Endothelial cell of umbilical vein (primary cell): ENCODE measurements at regions of chr2 and their contacts with region 1.

Region 1: DNA sequence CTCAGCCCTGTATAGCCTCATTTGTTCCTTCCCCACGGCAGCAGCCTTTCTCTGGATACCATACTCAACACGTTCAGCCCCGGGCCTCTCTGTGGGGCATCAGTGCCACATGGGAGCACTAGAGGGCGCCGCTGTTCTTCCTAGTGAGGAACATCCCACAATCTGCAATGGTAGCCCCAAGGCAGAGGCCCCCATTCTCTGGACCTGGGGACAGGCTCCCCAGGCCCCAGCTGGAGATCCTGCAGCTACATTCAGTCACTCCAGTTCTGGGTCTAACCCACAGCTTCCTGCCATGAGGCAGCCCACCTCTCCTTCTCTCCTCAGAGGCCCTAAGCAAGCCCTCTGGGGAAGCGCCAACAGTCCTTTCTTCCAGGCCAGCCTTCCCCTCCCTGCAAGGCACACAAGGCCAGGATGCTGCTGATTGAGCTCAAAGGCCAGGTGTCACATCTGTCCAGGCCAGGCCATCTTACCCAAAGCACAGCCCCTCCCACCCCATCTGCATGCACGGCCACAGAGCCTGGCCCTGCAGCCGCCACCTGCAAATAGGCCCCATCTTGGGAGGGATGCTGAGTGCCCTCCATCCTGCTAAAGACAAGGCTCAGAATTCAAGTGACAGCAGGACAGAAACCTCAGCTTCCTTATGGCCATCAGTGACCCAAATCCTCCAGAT is 14.3 kb upstream of the SFXN5 start:
- DNase-seq: peak; percentile 76
- H3K4me3 ChIP-seq: no peak overlapping the region
- H3K27ac ChIP-seq: no peak overlapping the region
- H3K4me1 ChIP-seq: peaks cover 31% of the 10 kb centered on the region
- H3K27me3 ChIP-seq: no peaks in the 10 kb centered on the region
- CTCF ChIP-seq: peak; percentile 95 to 96
- POLR2A ChIP-seq: no peak

Region 2: DNA sequence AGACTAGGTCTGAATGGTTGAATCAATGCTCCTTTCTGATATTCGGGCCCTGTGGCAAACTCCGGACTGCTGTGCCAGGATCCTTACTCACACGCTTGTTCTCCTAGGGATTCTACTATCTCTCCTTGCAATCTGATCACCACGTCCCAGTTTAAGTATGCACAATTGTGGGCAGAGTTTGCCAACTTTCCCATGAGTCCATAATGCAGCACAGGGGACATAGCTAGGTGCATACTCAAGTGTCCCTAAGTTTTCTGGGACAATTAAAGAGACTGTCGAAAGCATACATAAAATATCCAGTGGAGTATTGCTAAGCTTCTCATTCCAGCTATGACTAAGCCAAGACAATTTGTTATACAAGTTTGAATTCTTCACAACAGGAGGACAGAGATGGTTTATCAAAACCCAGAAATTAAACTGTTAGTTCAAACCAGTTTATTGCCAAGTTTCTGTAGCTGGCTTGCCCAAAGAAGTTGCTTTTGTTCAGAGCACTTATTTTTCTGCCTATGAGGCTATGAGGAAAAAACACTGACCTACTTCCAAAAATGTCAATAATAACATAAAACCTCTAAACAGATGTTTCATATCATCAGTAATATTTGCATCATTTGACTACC is 396.1 kb before region 1 on chr2:
- CTCF ChIA-PET with region 1: no interaction called
- POLR2A ChIA-PET with region 1: no interaction called
- dilution Hi-C with region 1: no loop called
- intact Hi-C with region 1: no loop called
- DNase-seq: no peak
- H3K4me3 ChIP-seq: no peak overlapping the region
- H3K27ac ChIP-seq: no peak overlapping the region
- H3K4me1 ChIP-seq: no peaks in the 10 kb centered on the region
- H3K27me3 ChIP-seq: no peaks in the 10 kb centered on the region
- CTCF ChIP-seq: no peak
- POLR2A ChIP-seq: no peak

Region 3: DNA sequence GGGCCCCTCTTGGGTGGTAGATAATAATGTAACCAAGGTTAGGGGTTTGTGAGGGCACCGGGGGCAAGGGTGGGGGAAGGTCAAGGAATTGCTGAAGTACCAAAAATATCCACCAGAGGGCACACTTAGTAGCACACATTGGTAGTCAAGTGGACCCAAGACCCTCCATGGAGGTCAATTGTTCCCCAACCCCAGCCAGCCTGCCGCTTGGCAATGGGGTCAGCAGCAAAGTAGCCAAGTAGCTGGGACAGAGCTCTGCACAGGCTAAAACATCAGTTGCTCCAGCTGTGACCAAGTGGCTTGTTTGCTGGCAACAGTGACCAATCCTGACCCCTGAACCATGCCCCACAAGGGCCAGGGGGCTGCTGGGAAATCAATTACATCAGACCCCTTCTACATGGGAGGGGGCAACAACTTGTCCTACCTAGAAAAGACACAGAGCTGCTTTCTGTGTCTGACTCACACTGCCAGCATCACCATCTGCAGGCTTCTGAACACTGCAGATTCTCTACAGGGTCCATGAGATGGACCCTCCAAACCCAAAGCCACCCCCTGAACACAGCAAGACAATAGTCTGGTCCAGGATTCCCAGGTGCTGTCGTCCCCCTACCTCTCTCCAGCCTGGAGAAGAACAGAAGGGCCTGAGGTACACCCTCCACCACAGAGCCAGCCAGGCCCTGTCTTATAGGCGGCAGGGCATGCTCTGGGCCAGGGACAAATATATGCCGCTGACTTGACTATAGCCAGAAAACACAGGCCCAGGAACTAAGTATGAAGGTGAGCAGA is 92.5 kb before region 1 on chr2:
- CTCF ChIA-PET with region 1: interaction called, 6 read pairs
- POLR2A ChIA-PET with region 1: no interaction called
- dilution Hi-C with region 1: no loop called
- intact Hi-C with region 1: loop called (anchors 1 kb)
- DNase-seq: peak; percentile 51
- H3K4me3 ChIP-seq: no peak overlapping the region
- H3K27ac ChIP-seq: no peak overlapping the region
- H3K4me1 ChIP-seq: no peaks in the 10 kb centered on the region
- H3K27me3 ChIP-seq: no peaks in the 10 kb centered on the region
- CTCF ChIP-seq: peak; percentile 57 to 70
- POLR2A ChIP-seq: no peak

Region 4: GRCh38 chr2:73100956-73101355 is 15.1 kb after region 1 on chr2:
- CTCF ChIA-PET with region 1: interaction called, 3 read pairs
- POLR2A ChIA-PET with region 1: interaction called, 11 read pairs
- dilution Hi-C with region 1: no loop called
- intact Hi-C with region 1: no loop called
- DNase-seq: no peak
- H3K4me3 ChIP-seq: no peak overlapping the region
- H3K27ac ChIP-seq: no peak overlapping the region
- H3K4me1 ChIP-seq: peaks cover 21% of the 10 kb centered on the region
- H3K27me3 ChIP-seq: no peaks in the 10 kb centered on the region
- CTCF ChIP-seq: no peak
- POLR2A ChIP-seq: no peak

Region 5: GRCh38 chr2:73156539-73157124 is 70.8 kb after region 1 on chr2:
- CTCF ChIA-PET with region 1: interaction called, 208 read pairs
- POLR2A ChIA-PET with region 1: no interaction called
- dilution Hi-C with region 1: no loop called
- intact Hi-C with region 1: loop called (anchors 1 kb)
- DNase-seq: peak; percentile 63
- H3K4me3 ChIP-seq: no peak overlapping the region
- H3K27ac ChIP-seq: no peak overlapping the region
- H3K4me1 ChIP-seq: peaks cover 4% of the 10 kb centered on the region
- H3K27me3 ChIP-seq: no peaks in the 10 kb centered on the region
- CTCF ChIP-seq: peak; percentile 78 to 93
- POLR2A ChIP-seq: no peak

Region 6: DNA sequence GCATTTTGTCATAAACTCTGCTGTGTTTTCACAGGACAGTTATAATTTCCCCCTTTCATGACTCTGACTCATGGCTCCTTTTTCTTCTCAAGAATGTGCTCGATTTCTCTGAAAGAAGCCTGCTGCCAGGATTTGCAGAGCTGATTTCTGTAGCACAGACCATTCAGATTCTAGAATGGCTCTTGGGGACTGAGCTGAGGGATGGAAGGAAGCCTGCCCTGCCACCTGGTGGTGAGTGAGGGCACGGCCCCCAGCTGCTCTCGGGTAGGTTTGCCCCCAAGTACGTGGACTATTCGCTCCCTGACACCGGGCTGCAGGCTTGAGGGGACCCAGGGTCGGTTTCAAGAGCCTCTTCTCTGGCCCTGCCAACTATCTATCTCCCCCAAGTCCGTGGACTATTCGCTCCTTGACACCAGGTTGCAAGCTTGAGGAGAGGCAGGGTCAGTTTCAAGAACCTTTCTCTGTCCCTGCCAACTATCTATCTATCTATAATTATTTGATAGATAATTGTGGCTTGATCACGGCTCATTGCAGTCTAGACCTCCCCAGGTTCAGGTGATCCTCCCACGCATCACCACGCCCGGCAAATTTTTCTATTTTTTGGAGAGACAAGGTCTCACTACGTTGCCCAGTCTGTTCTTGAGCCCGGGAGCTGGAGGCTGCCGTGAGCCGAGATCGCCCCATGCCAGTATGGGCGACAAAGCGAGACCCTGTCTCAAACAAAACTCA is 126.8 kb after region 1 on chr2:
- CTCF ChIA-PET with region 1: interaction called, 13 read pairs
- POLR2A ChIA-PET with region 1: no interaction called
- dilution Hi-C with region 1: no loop called
- intact Hi-C with region 1: loop called (anchors 1 kb)
- DNase-seq: peak; percentile 77
- H3K4me3 ChIP-seq: no peak overlapping the region
- H3K27ac ChIP-seq: no peak overlapping the region
- H3K4me1 ChIP-seq: peaks cover 9% of the 10 kb centered on the region
- H3K27me3 ChIP-seq: peaks cover 0 to 5% of the 10 kb centered on the region in 2 experiments
- CTCF ChIP-seq: peak; percentile 96 to 99
- POLR2A ChIP-seq: no peak